ENCODE measurements at regions of chr7 and their contacts with region 1.

Region 1: DNA sequence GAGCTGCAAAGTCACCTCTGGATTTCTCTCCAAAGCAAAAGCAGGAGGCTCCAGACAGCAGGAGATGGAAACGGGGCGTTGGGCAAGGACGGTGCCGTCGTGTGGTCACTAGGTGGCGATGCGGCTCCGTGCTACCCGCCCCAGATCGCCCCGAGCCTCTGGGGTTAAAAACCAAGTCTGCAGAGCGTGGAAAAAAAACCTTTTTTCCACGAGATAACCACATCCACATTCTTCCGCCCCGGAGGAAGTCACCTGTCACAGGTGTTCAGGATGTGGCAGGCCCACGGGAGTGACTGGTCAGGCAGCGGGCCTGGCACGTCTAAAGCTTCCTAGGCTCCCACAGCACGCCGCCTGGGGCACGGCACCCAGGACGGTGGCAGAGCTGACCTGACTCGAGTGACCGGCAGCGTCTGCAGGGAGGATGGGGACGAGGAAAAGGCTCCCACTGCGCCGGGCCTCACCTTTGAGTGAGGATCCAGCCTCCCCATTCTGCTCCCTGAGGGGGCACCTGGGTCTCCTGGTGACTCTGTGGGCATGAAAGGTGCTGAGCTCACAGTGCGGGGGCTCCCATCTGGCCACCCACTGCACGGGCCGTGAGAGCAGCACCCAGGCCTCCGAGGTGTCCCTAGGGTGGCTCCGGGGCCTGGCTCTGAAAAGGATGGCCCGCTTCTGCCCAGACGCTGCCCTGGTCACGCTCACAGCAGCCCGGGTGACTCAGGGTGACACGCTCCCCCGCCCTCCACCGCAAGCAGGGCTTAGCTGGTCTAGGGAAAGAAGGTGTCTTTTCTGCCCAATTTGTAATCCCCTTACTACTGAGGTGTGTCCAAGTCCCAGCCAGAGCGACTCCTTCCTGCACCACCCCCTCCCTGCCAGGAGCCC is 71.3 kb upstream of the TNRC18 start:
- DNase-seq: peak; percentile 78 to 82 (median 79)
- ATAC-seq: peak; percentile 87 to 91 (median 89)
- H3K4me3 ChIP-seq: no peak overlapping the region
- H3K27ac ChIP-seq: no peak overlapping the region
- H3K4me1 ChIP-seq: peaks cover 0 to 22% (median 8%) of the 10 kb centered on the region in 4 donors
- H3K27me3 ChIP-seq: no peaks in the 10 kb centered on the region
- CTCF ChIP-seq: peak; percentile 90 to 98 (median 96)
- POLR2A ChIP-seq: no peak

Region 2: DNA sequence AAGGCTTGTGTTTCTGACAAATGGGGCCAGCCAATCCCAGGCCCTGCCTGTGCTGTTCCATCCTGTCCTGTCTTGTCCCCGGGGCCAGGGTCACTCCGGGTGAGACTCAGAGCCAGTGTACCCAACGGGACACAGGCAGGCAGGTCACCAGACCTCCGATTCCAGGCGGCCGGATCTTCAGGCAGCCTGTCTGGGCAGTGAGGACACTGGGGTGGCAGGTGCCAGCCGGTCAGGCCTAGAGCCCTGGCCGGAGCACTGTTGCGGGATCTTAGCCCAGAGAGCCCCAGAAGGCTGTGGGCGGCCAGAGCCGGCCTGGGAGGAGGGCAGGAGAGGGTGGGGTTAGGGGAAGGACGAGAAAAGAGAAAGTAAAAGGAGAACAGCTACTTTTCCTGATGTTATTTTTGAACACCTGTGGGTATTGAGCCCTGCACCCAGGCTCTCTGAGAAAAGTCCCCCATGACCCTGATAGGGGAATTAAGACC is 63.0 kb after region 1 on chr7:
- intact Hi-C with region 1: no loop called
- DNase-seq: peak; percentile 80 to 98 (median 97)
- ATAC-seq: peak; percentile 50 to 80 (median 65)
- H3K4me3 ChIP-seq: peak overlapping the region; percentile 7 to 34 (median 16)
- H3K27ac ChIP-seq: peak overlapping the region; percentile 98 to 99 (median 99)
- H3K4me1 ChIP-seq: peaks cover 0 to 40% (median 15%) of the 10 kb centered on the region in 4 donors
- H3K27me3 ChIP-seq: no peaks in the 10 kb centered on the region
- CTCF ChIP-seq: no peak
- POLR2A ChIP-seq: peak; percentile 49

Region 3: GRCh38 chr7:5665094-5666025 is 170.4 kb after region 1 on chr7:
- intact Hi-C with region 1: loop called (anchors 10 kb)
- DNase-seq: peak in 1 of 3 donors; percentile 71
- ATAC-seq: peak; percentile 80 to 87 (median 82)
- H3K4me3 ChIP-seq: no peak overlapping the region
- H3K27ac ChIP-seq: no peak overlapping the region
- H3K4me1 ChIP-seq: peaks cover 0 to 4% (median 0%) of the 10 kb centered on the region in 4 donors
- H3K27me3 ChIP-seq: no peaks in the 10 kb centered on the region
- CTCF ChIP-seq: peak; percentile 80 to 83 (median 82)
- POLR2A ChIP-seq: no peak

Region 4: GRCh38 chr7:5677538-5678294 is 182.8 kb after region 1 on chr7:
- intact Hi-C with region 1: loop called in 1 of 2 experiments (anchors 10 kb)
- DNase-seq: peak in 2 of 3 donors; percentile 53 to 67
- ATAC-seq: peak; percentile 79 to 86 (median 83)
- H3K4me3 ChIP-seq: no peak overlapping the region
- H3K27ac ChIP-seq: no peak overlapping the region
- H3K4me1 ChIP-seq: peaks cover 0 to 11% (median 0%) of the 10 kb centered on the region in 4 donors
- H3K27me3 ChIP-seq: no peaks in the 10 kb centered on the region
- CTCF ChIP-seq: peak; percentile 68 to 72 (median 68)
- POLR2A ChIP-seq: no peak

Region 5: GRCh38 chr7:5704534-5704922 is 209.6 kb after region 1 on chr7:
- intact Hi-C with region 1: loop called in 1 of 2 experiments (anchors 10 kb)
- DNase-seq: peak; percentile 67 to 83 (median 71)
- ATAC-seq: peak; percentile 96 to 98 (median 98)
- H3K4me3 ChIP-seq: no peak overlapping the region
- H3K27ac ChIP-seq: no peak overlapping the region
- H3K4me1 ChIP-seq: peaks cover 0 to 13% (median 6%) of the 10 kb centered on the region in 4 donors
- H3K27me3 ChIP-seq: no peaks in the 10 kb centered on the region
- CTCF ChIP-seq: peak; percentile 91 to 96 (median 92)
- POLR2A ChIP-seq: no peak

Measured in right lobe of liver (tissue), 6 donors.